ENCODE measurements at regions of chr15 and their contacts with region 1.

Region 1: DNA sequence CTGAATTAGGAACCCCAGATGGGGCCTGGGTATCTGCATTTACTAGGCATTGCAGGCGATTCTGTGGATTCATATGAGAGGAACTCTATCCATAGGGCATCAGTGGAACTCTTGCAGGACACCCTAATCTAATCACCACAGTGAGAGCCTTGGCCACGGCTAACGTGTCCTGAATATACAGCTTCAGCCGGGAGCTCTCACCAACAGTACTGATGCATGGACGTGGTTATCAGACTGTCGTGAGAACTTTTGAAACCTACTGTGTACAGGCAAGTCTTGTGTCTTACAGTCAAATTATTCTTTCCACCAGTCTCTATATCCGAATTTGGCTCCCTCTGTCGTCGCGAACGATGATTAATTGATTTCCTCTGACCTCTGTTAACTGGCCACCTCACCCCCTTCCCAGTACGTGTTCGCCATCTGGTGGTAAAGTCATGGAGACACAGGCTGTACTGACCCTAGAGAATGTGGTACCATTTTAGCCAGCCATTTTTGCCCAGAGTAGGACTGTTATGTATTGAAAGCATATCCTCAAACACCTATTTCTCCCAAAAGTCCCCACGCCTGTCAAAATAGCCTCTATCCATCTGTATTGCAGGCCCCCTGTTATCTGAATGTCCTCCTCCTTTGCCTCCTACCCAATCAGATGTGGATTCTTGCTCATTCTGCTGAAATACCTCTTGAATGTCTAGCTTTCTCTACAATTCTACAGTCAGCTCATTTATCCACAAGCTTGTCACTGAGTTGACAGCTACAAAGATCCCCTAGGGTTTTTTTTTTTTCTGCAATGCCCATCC is 39.7 kb downstream of the GLDN start:
- DNase-seq: no peak
- H3K4me3 ChIP-seq: peak overlapping the region; percentile 25
- H3K27ac ChIP-seq: no peak overlapping the region
- H3K4me1 ChIP-seq: peaks cover 14% of the 10 kb centered on the region
- H3K27me3 ChIP-seq: peaks cover 13% of the 10 kb centered on the region
- CTCF ChIP-seq: peak; percentile 96

Region 2: DNA sequence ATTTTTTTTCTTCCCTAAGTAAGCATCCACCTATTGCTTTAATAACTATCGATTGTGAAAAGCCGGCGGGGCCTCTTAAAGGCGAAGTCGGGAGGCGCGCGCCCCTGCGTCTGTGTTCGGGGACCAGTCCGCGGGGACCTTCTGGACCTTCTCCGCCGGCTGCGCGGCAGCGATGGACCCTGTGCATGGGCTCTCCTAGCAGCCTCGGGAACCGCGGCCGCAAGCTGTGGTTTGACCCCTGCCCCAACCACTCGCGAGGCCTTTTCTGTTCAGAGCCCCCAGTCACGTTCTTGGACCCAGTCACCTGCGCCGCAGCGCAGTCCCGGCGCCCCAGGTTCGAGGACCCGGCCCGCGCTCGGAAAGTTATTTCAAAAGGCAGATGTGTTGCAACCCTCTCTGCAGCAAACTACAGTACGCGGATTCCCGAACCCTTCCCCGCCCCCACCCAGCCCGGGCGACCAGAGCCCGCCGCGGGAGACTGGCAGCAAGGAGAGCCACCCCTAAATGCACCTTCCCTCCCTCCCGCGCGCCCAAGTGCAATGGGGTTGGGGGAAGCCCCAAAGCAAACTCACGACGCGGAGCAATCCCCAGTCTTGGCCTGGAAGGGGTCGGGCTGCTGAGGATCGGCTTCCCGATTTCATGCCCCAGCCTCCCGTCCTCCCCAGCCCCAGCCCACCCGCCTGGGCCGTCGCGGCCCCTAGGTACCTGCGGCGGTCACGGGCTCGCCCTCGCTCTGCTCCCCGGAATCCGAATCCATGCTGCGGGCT is 287.2 kb before region 1 on chr15:
- intact Hi-C with region 1: no loop called
- DNase-seq: peak; percentile 45
- H3K4me3 ChIP-seq: peak overlapping the region; percentile 76
- H3K27ac ChIP-seq: peak overlapping the region; percentile 60
- H3K4me1 ChIP-seq: peaks cover 32% of the 10 kb centered on the region
- H3K27me3 ChIP-seq: peaks cover 15% of the 10 kb centered on the region
- CTCF ChIP-seq: no peak

Region 3: GRCh38 chr15:51162865-51163762 is 218.1 kb before region 1 on chr15:
- intact Hi-C with region 1: loop called (anchors 10 kb)
- DNase-seq: peak; percentile 65
- H3K4me3 ChIP-seq: peak overlapping the region; percentile 47
- H3K27ac ChIP-seq: peak overlapping the region; percentile 74
- H3K4me1 ChIP-seq: peaks cover 9% of the 10 kb centered on the region
- H3K27me3 ChIP-seq: no peaks in the 10 kb centered on the region
- CTCF ChIP-seq: peak; percentile 98

Region 4: DNA sequence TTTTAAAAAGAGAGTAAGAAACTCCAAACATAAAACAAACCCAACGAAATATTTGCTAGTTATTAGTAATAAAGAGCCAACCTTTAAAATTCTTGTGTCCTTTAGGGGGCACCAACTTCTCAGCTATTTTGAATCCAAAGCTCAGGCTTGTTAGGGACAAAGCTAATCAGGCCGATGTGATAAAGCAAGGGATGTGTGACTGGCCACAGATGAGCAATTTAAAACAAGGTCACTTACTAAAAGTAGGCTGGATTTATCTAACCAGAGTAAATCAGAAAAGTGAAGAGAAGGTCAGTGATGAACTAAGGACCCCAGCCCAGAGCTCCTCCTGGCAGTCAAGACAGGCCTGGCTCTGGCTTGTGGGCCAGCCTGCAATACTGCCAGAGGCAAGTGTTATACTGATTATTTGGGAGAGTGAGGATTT is 151.3 kb before region 1 on chr15:
- intact Hi-C with region 1: loop called (anchors 10 kb)
- DNase-seq: no peak
- H3K4me3 ChIP-seq: no peak overlapping the region
- H3K27ac ChIP-seq: no peak overlapping the region
- H3K4me1 ChIP-seq: peaks cover 14% of the 10 kb centered on the region
- H3K27me3 ChIP-seq: peaks cover 10% of the 10 kb centered on the region
- CTCF ChIP-seq: peak; percentile 47

Region 5: DNA sequence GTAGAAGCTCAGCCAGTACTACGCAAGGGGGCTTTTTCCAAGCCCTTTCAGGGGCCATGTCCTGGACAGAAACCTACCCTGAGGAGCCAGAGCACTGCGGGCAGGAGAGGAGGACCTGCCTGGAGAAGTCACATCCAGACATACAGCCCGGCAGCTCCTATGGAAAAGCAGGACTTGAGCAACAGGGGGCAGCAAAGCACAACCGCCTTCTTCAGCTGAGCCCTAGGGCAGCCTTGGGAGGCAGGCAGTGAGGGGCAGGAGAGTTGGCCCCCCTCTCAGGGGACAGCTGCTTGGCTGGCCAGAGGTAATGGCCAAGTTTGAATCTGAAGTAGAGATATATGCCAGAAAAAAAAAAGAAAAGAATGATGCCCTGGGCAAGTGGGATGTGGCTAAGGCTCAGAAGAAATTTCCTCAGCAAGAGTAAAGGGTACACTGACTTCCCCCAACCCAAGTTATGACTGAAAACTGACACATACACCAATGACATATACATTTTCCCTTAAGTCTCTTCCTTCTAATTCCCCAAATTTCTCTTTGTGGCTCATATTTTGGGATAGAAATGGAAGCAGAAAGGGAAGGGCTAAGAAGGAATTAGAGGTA is 99.7 kb before region 1 on chr15:
- intact Hi-C with region 1: loop called (anchors 2 kb)
- DNase-seq: peak; percentile 67
- H3K4me3 ChIP-seq: no peak overlapping the region
- H3K27ac ChIP-seq: peak overlapping the region; percentile 42
- H3K4me1 ChIP-seq: no peaks in the 10 kb centered on the region
- H3K27me3 ChIP-seq: peaks cover 23% of the 10 kb centered on the region
- CTCF ChIP-seq: peak; percentile 80

Region 6: DNA sequence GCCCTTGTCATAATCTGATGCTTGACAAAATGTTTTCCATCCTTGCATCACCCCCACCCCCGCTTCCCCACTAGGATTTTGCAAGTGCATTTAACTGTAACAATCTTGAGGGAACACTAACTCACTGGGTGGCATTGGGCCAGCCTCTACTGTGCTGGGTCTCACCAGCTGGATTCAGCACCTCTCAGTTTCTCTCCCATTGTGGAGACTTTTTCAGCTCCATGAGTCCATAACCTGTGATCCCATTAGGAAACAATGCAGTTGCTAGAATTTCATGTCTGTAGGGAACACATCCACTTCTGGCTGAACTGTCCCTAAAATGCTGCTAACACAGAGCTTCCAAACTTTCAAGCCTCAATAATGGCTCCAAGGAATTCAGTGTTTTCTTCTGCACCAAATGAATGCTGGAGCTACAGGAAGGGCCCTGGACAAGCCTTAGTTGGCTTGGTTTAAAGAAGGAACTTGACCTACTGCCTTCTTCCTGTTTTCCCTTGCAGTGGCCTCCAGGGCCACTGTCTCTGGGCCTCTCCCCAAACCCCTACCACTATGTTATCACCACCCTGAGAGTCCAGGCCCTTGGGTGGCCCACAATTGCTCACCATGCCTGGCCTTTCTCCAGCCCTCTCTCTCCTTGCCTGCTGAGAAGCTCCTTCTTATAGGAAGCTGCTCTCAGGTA is 58.4 kb before region 1 on chr15:
- intact Hi-C with region 1: no loop called
- DNase-seq: peak; percentile 58
- H3K4me3 ChIP-seq: no peak overlapping the region
- H3K27ac ChIP-seq: peak overlapping the region; percentile 59
- H3K4me1 ChIP-seq: peaks cover 17% of the 10 kb centered on the region
- H3K27me3 ChIP-seq: no peaks in the 10 kb centered on the region
- CTCF ChIP-seq: no peak

Region 7: GRCh38 chr15:51737280-51738017 is 356.3 kb after region 1 on chr15 and contains the start of gene LYSMD2:
- intact Hi-C with region 1: no loop called
- DNase-seq: peak; percentile 88
- H3K4me3 ChIP-seq: peak within 1 kb of the TSS; percentile 82
- H3K27ac ChIP-seq: peak within 1 kb of the TSS; percentile 92
- H3K4me1 ChIP-seq: peaks cover 35% of the 10 kb centered on the region
- H3K27me3 ChIP-seq: no peaks in the 10 kb centered on the region
- CTCF ChIP-seq: no peak
- total RNA-seq, gene LYSMD2: 4.2 TPM

Measured in left ventricle myocardium inferior (tissue), 1 donor.